ENCODE measurements at regions of chr6 and their contacts with region 1.

Region 1: DNA sequence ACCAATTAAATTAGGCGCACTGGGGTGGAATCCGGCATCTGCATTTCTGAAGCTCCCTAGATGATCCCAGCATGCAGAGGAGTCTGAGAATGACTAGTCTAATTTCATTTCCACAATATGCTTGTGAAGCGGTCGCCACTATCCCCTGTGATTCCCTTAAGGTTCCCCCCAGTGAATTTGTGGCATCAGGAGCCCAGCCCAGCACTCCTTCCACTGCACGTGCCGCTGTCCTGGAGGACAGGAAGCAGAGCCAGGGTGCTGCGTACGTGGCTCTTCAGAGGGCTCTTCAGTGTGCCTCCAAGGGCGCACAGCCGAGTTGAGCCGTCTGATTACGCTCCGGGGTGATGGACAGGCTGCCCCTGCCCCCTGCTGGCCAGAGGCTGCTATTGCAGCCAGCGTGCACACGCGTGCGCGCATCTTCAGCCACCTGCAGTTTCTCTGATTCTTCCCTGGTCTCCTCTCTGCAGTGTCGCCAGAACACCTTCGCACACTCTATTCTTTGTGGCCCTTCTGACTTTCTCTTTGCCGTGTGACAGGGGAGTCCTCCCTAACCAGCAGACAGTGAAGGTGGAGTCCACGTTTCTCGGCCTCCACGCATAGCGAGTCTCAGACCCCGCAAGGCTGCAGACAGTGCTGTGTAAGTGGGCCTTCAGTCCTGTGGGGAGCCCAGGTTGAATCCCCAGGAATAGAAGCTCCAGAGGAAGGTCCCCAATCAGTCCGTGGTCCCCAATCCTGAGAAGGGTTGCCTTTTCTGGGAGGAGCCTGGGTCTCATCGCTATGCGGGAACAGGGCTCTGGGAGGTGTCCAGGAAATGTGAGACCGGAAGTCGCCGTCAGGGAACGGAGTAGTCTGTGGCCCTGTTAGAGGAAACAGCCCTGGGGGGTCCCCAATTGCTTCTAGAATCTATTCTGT is 16.5 kb upstream of the NCR2 start:
- DNase-seq: peak; percentile 75
- H3K4me3 Mint-ChIP-seq: peak overlapping the region; percentile 23
- H3K27ac Mint-ChIP-seq: peak overlapping the region; percentile 21
- H3K4me1 Mint-ChIP-seq: peaks cover 16% of the 10 kb centered on the region
- H3K27me3 Mint-ChIP-seq: peaks cover 40% of the 10 kb centered on the region

Region 2: GRCh38 chr6:41100871-41101287 is 218.0 kb before region 1 on chr6:
- intact Hi-C with region 1: loop called (anchors 5 kb)
- DNase-seq: no peak
- H3K4me3 Mint-ChIP-seq: no peak overlapping the region
- H3K27ac Mint-ChIP-seq: no peak overlapping the region
- H3K4me1 Mint-ChIP-seq: peaks cover 12% of the 10 kb centered on the region
- H3K27me3 Mint-ChIP-seq: no peaks in the 10 kb centered on the region

Region 3: DNA sequence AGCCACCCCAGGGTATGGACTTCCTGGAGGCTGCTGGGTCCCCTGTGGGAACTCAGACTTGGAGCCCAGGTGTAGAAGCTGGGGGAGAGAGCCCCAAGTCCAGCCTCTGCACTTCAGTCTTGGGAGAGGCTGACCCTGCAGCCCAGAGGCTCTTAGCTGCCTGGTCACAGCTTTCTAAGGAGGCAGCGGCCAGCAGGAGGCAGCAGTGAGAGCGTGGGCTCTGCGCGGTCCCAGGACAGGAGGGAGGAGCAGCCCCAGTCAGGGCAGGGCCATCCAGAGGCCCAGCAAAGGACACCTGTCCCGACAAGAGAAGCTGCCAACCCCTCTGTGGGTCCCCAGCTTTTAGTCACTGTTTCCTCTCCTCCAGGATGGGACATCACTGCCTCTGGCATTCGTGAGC is 127.3 kb before region 1 on chr6:
- intact Hi-C with region 1: loop called (anchors 5 kb)
- DNase-seq: no peak
- H3K4me3 Mint-ChIP-seq: no peak overlapping the region
- H3K27ac Mint-ChIP-seq: no peak overlapping the region
- H3K4me1 Mint-ChIP-seq: peaks cover 23% of the 10 kb centered on the region
- H3K27me3 Mint-ChIP-seq: no peaks in the 10 kb centered on the region

Region 4: GRCh38 chr6:41278699-41279405 is 40.1 kb before region 1 on chr6:
- intact Hi-C with region 1: loop called (anchors 1 kb)
- DNase-seq: peak; percentile 54
- H3K4me3 Mint-ChIP-seq: no peak overlapping the region
- H3K27ac Mint-ChIP-seq: no peak overlapping the region
- H3K4me1 Mint-ChIP-seq: peaks cover 6% of the 10 kb centered on the region
- H3K27me3 Mint-ChIP-seq: peaks cover 18% of the 10 kb centered on the region

Region 5: GRCh38 chr6:41306187-41306854 is 12.6 kb before region 1 on chr6:
- intact Hi-C with region 1: loop called (anchors 1 kb)
- DNase-seq: no peak
- H3K4me3 Mint-ChIP-seq: no peak overlapping the region
- H3K27ac Mint-ChIP-seq: no peak overlapping the region
- H3K4me1 Mint-ChIP-seq: peaks cover 8% of the 10 kb centered on the region
- H3K27me3 Mint-ChIP-seq: peaks cover 57% of the 10 kb centered on the region